ENCODE measurements at regions of chr9 and their contacts with region 1.

Region 1: DNA sequence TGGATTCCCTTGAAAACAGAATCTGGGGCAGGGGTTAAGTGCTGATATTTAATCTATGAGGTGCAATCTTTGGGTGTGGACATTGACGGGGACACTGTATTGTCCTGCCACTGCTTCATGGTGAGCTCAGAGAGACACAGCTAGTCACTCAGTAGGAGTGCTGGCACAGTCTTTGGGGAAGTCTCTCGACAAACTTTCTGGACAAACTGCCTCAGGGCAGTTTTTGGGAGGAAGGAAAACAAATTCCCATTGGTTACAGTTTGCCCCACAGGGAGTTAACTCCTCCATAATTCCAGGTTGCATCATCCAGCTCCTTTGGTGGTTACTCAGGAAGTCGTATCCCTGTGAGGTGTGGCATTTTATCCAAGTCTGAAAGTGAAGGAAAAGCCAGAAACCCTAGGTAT is 17.8 kb downstream of the HNRNPK start:
- DNase-seq: no peak
- H3K4me3 ChIP-seq: no peak overlapping the region
- H3K27ac ChIP-seq: no peak overlapping the region
- H3K4me1 ChIP-seq: peaks cover 9% of the 10 kb centered on the region
- CTCF ChIP-seq: no peak

Region 2: DNA sequence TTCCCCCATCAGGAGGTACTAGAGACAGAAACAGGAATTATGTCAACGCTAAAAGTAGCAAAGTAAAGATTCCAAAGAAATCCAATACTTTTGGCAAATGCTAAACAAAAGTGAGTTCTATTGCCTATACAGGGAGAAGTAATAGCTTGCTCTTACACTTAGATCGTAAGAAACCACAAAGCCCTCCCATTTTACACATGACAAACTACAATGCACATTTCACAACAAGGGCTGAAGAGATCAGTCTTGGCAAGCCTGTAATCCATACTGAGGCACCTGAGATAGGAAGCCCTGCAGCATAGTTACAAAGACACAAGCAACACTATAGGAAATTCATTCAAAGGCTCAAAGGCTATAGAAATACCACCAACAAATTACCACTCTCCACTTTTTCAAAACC is 10.1 kb after region 1 on chr9:
- CTCF ChIA-PET with region 1: no interaction called
- POLR2A ChIA-PET with region 1: interaction called, 14 read pairs
- intact Hi-C with region 1: no loop called
- DNase-seq: no peak
- H3K4me3 ChIP-seq: no peak overlapping the region
- H3K27ac ChIP-seq: no peak overlapping the region
- H3K4me1 ChIP-seq: peaks cover 10% of the 10 kb centered on the region
- CTCF ChIP-seq: no peak

Region 3: DNA sequence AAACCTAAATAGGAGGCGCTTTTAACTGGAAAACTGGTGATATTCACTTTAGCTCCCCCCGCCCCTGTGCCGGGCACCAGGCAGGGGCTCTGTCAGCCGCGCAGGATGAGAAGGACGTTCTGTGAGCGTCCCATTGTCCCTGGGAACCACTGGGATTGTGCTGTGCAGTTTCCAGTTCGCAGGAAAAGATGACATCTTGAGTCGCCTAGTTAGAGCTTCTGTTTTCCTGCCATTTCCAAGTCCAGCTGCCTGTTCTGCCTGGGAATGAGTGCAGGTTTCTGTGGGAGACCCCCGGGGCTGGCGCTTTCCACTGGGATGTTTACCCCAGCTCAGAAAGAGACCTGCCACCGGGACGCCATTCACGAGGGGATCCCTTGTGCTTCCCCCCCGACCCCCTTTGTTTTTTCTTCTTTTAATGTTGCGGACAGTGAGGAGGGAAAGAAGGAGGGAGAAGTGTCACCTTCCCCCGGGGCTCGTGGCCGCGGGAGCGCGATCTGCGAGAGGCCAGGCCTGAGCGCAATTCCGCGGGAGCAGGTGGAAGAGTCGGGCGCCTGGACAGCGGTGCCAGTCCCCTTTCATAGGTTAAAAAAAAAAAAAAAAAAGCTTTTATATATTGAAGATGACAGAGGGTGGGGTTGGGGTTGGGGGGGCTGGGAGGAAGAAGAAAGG is 139.9 kb after region 1 on chr9:
- CTCF ChIA-PET with region 1: no interaction called
- POLR2A ChIA-PET with region 1: no interaction called
- intact Hi-C with region 1: no loop called
- DNase-seq: no peak
- H3K4me3 ChIP-seq: no peak overlapping the region
- H3K27ac ChIP-seq: no peak overlapping the region
- H3K4me1 ChIP-seq: no peaks in the 10 kb centered on the region
- CTCF ChIP-seq: no peak

Region 4: DNA sequence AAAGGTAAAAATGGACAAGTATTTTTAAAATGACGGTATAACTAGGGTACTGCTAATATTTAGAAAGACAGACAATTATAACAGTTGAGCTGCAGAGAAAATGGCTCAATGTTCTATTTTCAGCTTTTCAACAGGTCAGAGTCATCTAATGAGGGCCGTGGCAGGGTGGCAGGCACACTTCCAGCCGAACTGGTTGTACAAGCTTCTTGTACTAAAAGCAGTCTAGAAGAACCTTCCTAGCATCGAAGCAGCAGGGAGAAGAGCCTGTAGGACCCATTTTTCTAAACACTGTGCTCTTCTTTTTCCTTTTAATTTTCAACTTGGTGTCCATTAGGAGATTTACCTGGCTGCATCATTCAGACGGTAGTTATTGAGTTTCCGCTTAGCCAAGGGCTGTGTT is 292.8 kb after region 1 on chr9:
- CTCF ChIA-PET with region 1: no interaction called
- POLR2A ChIA-PET with region 1: no interaction called
- intact Hi-C with region 1: no loop called
- DNase-seq: no peak
- H3K4me3 ChIP-seq: no peak overlapping the region
- H3K27ac ChIP-seq: no peak overlapping the region
- H3K4me1 ChIP-seq: no peaks in the 10 kb centered on the region
- CTCF ChIP-seq: no peak

Measured in OCI-LY7 (cell line).